ENCODE measurements at regions of chr3 and their contacts with region 1.

Region 1: DNA sequence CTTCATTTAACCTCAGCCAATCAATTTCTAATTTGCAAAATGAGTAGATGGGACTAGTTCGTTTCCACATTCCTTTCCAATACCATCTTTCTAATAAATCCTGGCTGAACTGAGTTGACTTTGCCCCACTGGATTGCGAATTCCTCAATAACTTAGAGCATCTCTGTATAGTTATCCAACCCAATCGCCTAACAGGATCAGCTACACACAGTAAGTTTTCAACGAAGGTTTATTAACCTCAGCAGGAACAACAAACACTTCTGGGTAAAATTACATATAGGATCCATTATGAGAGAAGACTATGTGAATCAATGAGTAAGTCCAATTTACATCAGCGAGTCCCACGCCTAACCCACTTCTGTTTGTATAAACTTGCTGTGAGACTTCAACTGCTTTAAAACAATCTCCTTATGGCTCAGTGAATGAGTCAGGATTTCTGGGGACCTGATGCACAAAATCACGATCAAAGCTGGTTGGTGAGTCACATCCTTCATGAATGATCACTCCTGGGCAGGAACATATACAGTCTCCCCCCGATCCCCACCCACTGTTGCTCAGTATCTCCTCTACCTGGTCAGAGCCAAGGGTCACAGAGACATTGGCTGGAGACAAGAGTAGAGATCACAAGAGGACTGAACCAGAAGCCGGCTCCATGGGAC is 142.8 kb downstream of the EDEM1 start:
- DNase-seq: peak; percentile 63
- H3K4me3 Mint-ChIP-seq: no peak overlapping the region
- H3K27ac Mint-ChIP-seq: peak overlapping the region; percentile 15
- H3K4me1 Mint-ChIP-seq: peaks cover 23% of the 10 kb centered on the region
- H3K27me3 Mint-ChIP-seq: peaks cover 3% of the 10 kb centered on the region

Region 2: GRCh38 chr3:4797201-4797705 is 533.0 kb before region 1 on chr3:
- CTCF ChIA-PET with region 1: no interaction called
- intact Hi-C with region 1: no loop called
- DNase-seq: no peak
- H3K4me3 Mint-ChIP-seq: no peak overlapping the region
- H3K27ac Mint-ChIP-seq: no peak overlapping the region
- H3K4me1 Mint-ChIP-seq: no peaks in the 10 kb centered on the region
- H3K27me3 Mint-ChIP-seq: no peaks in the 10 kb centered on the region

Region 3: GRCh38 chr3:4845882-4846281 is 484.4 kb before region 1 on chr3:
- CTCF ChIA-PET with region 1: no interaction called
- intact Hi-C with region 1: loop called (anchors 5 kb)
- DNase-seq: no peak
- H3K4me3 Mint-ChIP-seq: no peak overlapping the region
- H3K27ac Mint-ChIP-seq: peak overlapping the region; percentile 93
- H3K4me1 Mint-ChIP-seq: peaks cover 94% of the 10 kb centered on the region
- H3K27me3 Mint-ChIP-seq: no peaks in the 10 kb centered on the region

Region 4: GRCh38 chr3:5187156-5187919 is 142.9 kb before region 1 on chr3 and contains the start of gene EDEM1:
- CTCF ChIA-PET with region 1: no interaction called
- intact Hi-C with region 1: loop called (anchors 1 kb)
- DNase-seq: peak; percentile 95
- H3K4me3 Mint-ChIP-seq: peak within 1 kb of the TSS; percentile 96
- H3K27ac Mint-ChIP-seq: peak within 1 kb of the TSS; percentile 99
- H3K4me1 Mint-ChIP-seq: peaks cover 27% of the 10 kb centered on the region
- H3K27me3 Mint-ChIP-seq: no peaks in the 10 kb centered on the region
- total RNA-seq, gene EDEM1: 137 to 138 TPM

Region 5: DNA sequence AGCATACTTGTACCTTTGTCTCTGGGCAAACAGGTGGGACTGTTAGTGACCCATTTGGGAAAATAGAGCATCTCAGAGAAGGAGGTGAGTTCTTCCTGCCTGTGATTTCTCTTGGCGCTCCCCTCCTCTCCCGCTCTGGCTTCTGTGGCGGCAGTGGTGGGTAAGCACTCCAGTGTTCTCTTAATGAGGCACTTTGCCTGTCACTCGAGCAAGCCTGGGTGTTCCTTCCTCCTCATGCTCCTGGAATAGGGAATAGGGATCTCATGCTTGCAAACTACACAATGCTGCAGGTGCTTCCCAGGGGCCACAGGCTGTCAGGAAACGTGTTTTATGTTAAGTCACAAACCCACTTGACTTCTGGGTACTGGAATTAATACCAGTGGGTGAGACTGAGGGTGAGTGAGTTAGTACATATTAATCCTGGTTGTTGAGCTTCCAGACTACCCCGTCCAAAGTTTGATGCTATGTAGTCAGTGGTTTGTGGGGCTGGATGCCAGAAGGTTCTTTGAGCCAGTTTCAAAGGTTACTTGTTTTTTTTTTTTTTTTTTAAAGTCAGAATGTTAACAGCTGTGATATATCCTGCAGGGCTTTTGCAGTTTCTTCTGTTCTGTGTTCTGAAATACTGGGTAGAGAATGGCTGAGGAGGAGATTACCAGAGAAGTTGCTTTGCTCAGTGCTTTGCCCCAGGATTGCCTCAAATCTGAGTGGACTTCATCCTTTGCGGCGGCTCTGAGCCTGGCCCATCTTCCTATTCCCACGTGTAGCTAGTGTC is 112.3 kb before region 1 on chr3:
- CTCF ChIA-PET with region 1: no interaction called
- intact Hi-C with region 1: no loop called
- DNase-seq: no peak
- H3K4me3 Mint-ChIP-seq: no peak overlapping the region
- H3K27ac Mint-ChIP-seq: no peak overlapping the region
- H3K4me1 Mint-ChIP-seq: peaks cover 9% of the 10 kb centered on the region
- H3K27me3 Mint-ChIP-seq: no peaks in the 10 kb centered on the region

Region 6: DNA sequence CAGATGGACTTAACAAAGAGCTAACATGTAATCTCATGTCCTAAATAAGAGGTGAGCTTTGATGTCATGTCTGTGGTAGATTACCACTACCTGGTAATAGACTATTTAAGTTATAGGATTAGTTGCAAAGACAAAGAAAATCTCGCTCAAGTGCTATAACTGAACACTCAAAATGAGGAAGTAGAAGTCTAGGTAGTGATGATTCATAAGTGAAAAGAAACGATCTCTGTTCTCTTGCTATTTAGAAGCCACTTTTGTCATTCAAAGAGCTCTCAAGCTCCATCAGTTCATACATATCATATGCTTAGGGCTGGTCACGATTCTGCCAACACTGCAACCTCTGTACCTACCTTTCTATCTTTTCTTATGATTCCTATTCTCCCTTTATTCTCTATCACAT is 31.8 kb before region 1 on chr3:
- CTCF ChIA-PET with region 1: no interaction called
- intact Hi-C with region 1: loop called (anchors 1 kb)
- DNase-seq: no peak
- H3K4me3 Mint-ChIP-seq: no peak overlapping the region
- H3K27ac Mint-ChIP-seq: no peak overlapping the region
- H3K4me1 Mint-ChIP-seq: peaks cover 6% of the 10 kb centered on the region
- H3K27me3 Mint-ChIP-seq: no peaks in the 10 kb centered on the region